ENCODE measurements at regions of chr14 and their contacts with region 1.

Region 1: DNA sequence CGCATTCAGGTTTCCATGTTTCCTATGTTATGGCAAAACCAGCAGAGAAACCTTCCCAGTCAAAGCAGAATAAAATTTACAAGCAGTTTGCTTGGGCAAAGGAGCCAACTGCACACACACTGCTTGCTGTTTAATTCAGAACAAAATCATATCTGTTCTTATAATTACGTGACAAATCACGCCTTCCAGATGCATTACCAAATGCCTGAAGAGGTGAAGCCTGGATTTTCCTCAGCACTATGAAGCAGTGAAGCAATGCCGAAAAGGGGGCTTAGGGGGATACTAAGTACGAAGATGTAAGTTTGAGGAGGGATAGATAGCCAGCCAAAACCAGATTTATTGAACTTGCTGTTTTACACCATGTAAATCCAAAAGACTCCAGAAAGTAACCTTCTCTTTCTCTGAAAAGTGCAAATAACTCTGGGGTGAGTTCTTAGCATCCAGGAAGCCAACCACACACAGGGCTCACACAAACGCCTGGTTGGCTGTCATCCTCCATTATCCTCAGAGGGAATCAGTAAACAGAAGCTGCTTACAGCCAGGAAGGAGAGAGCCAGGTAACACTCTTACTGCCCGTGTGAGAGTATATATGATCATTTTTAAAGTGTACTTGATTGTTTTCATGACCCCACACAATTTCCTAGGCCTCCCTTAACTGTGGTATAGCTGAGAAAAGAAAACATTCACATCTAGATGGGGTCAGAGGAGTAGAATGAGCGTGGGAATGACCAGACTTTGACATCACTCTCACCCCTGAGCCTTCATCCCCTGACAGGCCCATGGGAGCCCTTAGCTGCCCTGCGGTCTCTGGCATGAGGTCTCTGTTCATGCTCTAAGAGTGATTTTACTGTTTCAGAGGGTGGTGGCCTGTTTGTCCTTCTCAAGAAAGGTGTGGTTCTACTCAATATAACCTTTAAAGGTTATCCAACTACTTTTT is 442.5 kb downstream of the EGLN3 start:
- DNase-seq: no peak
- ATAC-seq: no peak

Region 2: GRCh38 chr14:34453229-34453628 is 944.8 kb after region 1 on chr14:
- intact Hi-C with region 1: loop called (anchors 10 kb)
- DNase-seq: no peak
- ATAC-seq: no peak

Measured in Right ventricle myocardium inferior (tissue), 1 donor.